Posterior cingulate gyrus (tissue), 11 donors: ENCODE measurements at regions of chr1 and their contacts with region 1.

Region 1: DNA sequence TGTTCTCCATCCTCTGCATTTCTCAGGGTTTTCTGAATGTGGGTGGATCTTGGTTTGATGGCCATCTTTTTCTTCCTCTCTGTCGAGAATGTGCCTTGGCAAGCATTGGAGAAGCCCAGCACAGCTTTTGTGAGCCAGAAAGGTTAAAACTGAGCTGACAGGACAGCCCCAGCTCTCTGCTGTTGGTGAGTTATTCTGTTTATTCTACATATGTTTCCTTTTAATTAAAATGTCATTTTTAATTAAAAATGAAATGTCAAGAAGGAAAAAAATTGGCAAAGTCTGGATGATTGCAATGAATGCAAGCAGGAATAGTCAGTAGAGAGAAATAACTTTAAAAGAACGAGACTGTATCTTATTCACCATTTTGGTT is 325.8 kb downstream of the PTBP2 start:
- DNase-seq: no peak

Region 2: DNA sequence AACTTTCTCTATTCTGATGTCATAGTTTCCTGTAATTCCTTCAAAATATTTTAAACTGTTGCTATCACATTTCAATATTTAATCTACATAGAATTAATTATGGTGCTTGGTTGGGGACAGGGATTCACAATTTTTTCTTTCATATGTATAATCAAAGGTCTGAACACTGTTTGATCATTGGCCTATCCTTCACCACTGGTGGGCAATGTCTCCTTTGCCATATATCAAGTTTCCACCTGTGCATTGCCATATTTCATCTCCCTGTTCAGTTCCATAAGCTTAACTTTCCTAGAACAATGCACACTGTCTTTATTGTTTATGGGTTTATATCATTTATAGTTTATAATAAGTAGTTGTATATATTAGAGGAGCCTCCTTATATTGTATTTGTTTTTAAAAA is 700.7 kb before region 1 on chr1:
- intact Hi-C with region 1: no loop called
- DNase-seq: no peak

Region 3: DNA sequence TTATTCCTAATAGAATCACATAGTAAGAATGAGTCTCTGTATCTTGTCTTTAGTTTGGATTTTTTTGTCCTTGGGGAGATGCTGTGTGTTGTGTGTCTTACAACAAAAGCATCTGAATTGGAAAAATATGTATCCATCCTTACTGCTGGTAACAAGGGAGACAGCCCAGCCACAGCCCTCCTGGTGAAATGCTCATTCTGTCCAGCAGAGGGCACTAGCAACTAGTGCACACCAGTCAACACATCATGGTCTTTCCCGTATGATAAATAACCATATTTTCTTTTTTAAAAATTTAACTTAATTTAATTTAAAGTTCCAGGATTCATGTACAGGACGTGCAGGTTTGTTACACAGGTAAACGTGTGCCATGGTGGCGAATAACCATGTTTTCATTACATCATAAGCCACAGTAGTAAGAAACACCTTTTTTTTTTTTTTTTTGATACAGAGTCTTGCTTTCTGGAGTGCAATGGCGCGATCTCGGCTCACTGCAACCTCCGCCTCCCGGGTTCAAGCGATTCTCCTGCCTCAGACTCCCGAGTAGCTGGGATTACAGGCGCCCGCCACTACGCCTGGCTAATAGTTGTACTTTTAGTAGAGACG is 80.8 kb before region 1 on chr1:
- intact Hi-C with region 1: loop called (anchors 5 kb)
- DNase-seq: peak; percentile 59 to 96 (median 86)

Region 4: GRCh38 chr1:97114842-97115241 is 67.4 kb after region 1 on chr1:
- intact Hi-C with region 1: no loop called
- DNase-seq: no peak

Region 5: GRCh38 chr1:97350662-97351061 is 303.3 kb after region 1 on chr1:
- intact Hi-C with region 1: no loop called
- DNase-seq: no peak